ENCODE measurements at regions of chr10 and their contacts with region 1.

Region 1: GRCh38 chr10:96651998-96652431 is 65.2 kb upstream of the TM9SF3 start:
- DNase-seq: peak; percentile 58 to 74
- ATAC-seq: peak; percentile 78 to 88 (median 87)
- H3K4me3 ChIP-seq: no peak overlapping the region
- H3K4me3 Mint-ChIP-seq: peak overlapping the region; percentile 69
- H3K27ac ChIP-seq: peak overlapping the region; percentile 83
- H3K27ac Mint-ChIP-seq: peak overlapping the region; percentile 90 to 93
- H3K4me1 ChIP-seq: peaks cover 79% of the 10 kb centered on the region
- H3K4me1 Mint-ChIP-seq: peaks cover 72 to 78% of the 10 kb centered on the region in 2 donors
- H3K27me3 ChIP-seq: no peaks in the 10 kb centered on the region
- H3K27me3 Mint-ChIP-seq: no peaks in the 10 kb centered on the region
- CTCF ChIP-seq: no peak

Region 2: DNA sequence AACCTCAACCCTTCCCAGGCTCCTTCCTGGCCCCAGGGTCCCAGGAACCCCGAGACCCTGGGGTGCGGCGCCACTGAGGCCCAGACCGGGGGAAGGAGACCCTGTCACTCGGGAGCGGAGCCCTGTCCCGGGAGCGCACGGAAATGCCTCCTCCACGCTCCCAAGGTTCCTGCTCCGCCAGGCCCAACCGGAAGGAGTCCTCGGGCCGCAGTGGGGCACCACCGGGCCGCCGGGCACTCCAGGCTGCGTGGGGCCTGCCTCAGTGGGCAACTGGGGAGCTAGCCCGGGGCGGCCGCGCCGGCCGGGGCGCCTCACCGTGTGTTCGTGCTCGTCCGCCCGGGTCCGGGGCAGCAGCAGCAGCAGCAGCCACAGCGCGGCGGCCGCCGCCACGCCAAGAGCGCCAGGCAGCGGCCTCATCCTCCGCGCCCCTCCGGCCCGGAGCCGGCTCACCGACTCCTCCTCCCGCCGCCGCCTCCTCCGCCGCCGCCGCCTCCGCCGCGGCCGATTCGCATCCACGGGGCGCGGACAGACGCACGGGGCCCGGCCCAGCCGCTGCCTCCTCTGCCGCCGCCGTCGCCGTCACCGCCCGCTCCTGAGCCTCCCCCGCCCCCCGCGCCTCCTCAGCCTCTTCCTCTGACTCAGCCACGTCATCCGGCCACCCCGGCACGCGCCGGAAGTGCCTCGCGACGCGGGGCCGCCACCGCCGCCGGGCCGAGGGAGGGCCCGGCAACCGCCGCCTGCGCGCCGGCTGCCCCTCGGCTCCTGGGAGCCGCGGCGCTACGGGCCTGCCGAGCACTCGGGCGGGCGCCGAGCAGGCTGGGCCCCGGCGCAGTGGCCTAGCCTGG is 65.4 kb before region 1 on chr10 and contains the start of gene TM9SF3:
- intact Hi-C with region 1: loop called (anchors 5 kb)
- DNase-seq: peak; percentile 90 to 96
- ATAC-seq: peak; percentile 82 to 95 (median 88)
- H3K4me3 ChIP-seq: peak within 1 kb of the TSS; percentile 96
- H3K4me3 Mint-ChIP-seq: peak within 1 kb of the TSS; percentile 97
- H3K27ac ChIP-seq: peak within 1 kb of the TSS; percentile 99
- H3K27ac Mint-ChIP-seq: peak within 1 kb of the TSS in 1 of 2 donors; percentile 97
- H3K4me1 ChIP-seq: peaks cover 21% of the 10 kb centered on the region
- H3K4me1 Mint-ChIP-seq: peaks cover 31 to 39% of the 10 kb centered on the region in 2 donors
- H3K27me3 ChIP-seq: no peaks in the 10 kb centered on the region
- H3K27me3 Mint-ChIP-seq: no peaks in the 10 kb centered on the region
- CTCF ChIP-seq: no peak
- total RNA-seq, gene TM9SF3: 113 to 119 (median 117) TPM

Region 3: GRCh38 chr10:96670786-96671185 is 18.8 kb after region 1 on chr10:
- intact Hi-C with region 1: loop called (anchors 1 kb)
- DNase-seq: peak; percentile 57 to 59
- ATAC-seq: peak; percentile 54 to 81 (median 78)
- H3K4me3 ChIP-seq: no peak overlapping the region
- H3K4me3 Mint-ChIP-seq: peak overlapping the region; percentile 85
- H3K27ac ChIP-seq: peak overlapping the region; percentile 94
- H3K27ac Mint-ChIP-seq: peak overlapping the region; percentile 98 to 99
- H3K4me1 ChIP-seq: peaks cover 79% of the 10 kb centered on the region
- H3K4me1 Mint-ChIP-seq: peaks cover 70 to 77% of the 10 kb centered on the region in 2 donors
- H3K27me3 ChIP-seq: no peaks in the 10 kb centered on the region
- H3K27me3 Mint-ChIP-seq: no peaks in the 10 kb centered on the region
- CTCF ChIP-seq: no peak

Region 4: DNA sequence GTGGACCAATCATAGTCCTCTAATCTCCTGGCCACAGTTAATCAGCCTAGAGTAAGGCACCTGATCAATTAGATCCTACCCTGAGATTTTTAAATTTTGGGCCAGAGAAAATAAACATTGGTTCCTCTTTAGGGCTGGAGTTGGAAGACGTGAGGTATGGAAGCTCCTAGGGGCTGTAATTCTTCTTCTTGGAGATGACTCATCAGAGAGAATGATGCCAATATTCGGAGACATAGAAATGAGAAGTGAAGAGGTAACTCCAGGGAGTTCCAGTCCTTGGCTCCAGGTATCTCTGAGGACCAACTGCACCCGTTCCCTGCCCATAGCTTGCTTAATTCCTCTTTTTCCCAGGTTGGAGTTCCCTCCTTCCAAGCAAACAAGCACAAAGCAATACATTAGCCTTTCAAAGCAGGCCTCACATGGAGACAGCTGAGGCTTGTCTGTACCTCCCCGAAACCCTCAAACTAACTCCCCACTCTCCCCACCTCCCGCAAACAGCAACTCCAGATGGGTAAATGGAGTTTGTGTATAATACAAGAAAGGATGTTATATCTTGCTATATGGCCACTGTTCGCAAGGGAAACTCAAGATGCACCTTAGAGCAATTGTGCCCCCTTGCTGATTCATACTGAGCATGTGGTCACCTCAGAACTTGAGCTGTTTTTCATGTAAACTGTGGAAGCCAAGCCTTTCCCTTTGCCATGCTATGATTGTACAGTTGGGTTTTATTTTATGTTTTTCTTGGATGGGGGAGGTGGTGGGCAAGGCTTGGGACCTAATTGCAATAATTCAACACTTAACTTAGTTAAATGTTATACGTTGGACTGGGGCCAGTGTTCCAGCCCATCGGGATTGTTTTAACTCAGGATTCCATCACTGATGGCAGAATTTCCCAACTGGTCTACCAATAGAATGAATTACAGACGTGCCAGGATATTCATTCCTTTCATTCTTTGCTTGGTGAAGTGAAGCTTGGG is 39.0 kb after region 1 on chr10:
- intact Hi-C with region 1: loop called (anchors 1 kb)
- DNase-seq: peak in 1 of 2 donors; percentile 30
- ATAC-seq: no peak
- H3K4me3 ChIP-seq: no peak overlapping the region
- H3K4me3 Mint-ChIP-seq: peak overlapping the region; percentile 2
- H3K27ac ChIP-seq: no peak overlapping the region
- H3K27ac Mint-ChIP-seq: peak overlapping the region; percentile 56 to 98
- H3K4me1 ChIP-seq: peaks cover 61% of the 10 kb centered on the region
- H3K4me1 Mint-ChIP-seq: peaks cover 80 to 84% of the 10 kb centered on the region in 2 donors
- H3K27me3 ChIP-seq: no peaks in the 10 kb centered on the region
- H3K27me3 Mint-ChIP-seq: no peaks in the 10 kb centered on the region
- CTCF ChIP-seq: peak; percentile 13